OCI-LY7 (cell line): ENCODE measurements at regions of chr10 and their contacts with region 1.

Region 1: GRCh38 chr10:2927958-2928840 is 139.1 kb upstream of the PFKP start:
- DNase-seq: peak; percentile 54
- H3K4me3 ChIP-seq: no peak overlapping the region
- H3K27ac ChIP-seq: no peak overlapping the region
- H3K4me1 ChIP-seq: no peaks in the 10 kb centered on the region
- CTCF ChIP-seq: peak; percentile 78

Region 2: GRCh38 chr10:2978111-2978510 is 49.9 kb after region 1 on chr10:
- CTCF ChIA-PET with region 1: no interaction called
- POLR2A ChIA-PET with region 1: no interaction called
- intact Hi-C with region 1: loop called (anchors 10 kb)
- DNase-seq: peak; percentile 43
- H3K4me3 ChIP-seq: no peak overlapping the region
- H3K27ac ChIP-seq: no peak overlapping the region
- H3K4me1 ChIP-seq: no peaks in the 10 kb centered on the region
- CTCF ChIP-seq: peak; percentile 72

Region 3: DNA sequence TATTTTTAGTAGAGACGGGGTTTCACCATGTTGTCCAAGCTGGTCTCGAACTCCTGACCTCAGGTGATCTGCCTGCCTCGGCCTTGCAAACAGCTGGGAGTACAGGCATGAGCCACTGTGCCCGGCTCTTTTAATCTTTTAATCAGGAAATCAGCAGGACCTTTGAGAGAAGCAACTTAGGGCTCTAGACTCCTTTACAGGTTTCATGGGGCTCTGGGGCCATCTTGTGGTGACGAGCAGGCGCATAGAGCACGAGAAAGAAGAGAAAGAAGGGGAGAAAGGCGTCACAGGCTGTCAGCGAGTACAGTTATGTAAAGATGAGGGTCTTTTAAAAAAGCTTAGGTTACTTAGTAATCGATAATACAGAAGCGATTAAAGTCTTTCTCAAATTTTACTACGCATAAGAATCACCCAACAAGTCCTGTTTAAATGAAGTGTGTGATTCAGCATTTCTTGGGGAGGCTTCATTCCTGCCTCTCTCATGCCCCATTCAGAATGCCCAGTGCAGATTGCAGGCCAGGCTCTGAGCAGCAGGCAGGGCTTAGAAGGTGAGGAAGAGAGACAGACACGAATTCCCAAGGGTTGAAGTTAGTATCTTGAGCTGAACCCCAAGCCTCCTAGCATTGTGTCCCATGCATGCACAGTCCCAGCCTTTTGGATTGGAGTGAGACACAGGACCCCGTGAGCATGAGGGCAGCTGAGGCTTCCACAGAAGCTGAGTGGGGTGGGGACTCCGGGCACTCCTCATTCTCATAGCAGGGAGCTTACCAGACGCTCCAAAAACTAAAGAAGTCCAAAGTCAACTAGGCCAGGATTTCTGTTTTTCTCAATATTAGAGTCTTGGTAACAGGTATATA is 115.5 kb after region 1 on chr10:
- CTCF ChIA-PET with region 1: no interaction called
- POLR2A ChIA-PET with region 1: no interaction called
- intact Hi-C with region 1: loop called (anchors 1 kb)
- DNase-seq: peak; percentile 57
- H3K4me3 ChIP-seq: no peak overlapping the region
- H3K27ac ChIP-seq: no peak overlapping the region
- H3K4me1 ChIP-seq: no peaks in the 10 kb centered on the region
- CTCF ChIP-seq: peak; percentile 79